Activated CD4-positive, alpha-beta memory T cell treated with anti-CD3 and anti-CD28 coated beads for 36 hours (primary cell): ENCODE measurements at regions of chr14 and their contacts with region 1.

Region 1: DNA sequence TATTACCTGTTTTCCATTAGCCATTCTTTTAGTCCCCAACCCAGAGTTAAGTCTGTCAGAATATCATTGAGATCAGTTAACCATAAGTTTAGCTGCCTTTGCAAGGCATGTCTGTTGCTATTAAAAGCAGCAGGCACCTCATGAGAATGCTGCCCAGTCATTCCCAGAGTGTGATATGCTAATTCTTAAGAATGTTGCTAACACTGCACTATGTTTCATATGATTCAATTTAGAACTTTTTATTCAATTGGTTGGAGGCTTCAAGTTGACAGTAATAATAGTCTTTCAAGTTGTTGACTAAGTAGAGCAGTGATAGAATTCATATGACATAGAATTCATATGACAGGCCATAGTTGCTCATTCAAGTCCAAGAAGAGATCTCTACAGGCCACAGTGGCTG is 292.3 kb downstream of the FUT8 start:
- DNase-seq: peak; percentile 66
- H3K4me3 Mint-ChIP-seq: no peak overlapping the region
- H3K27ac Mint-ChIP-seq: peak overlapping the region; percentile 64
- H3K4me1 Mint-ChIP-seq: peaks cover 31% of the 10 kb centered on the region
- H3K27me3 Mint-ChIP-seq: no peaks in the 10 kb centered on the region

Region 2: DNA sequence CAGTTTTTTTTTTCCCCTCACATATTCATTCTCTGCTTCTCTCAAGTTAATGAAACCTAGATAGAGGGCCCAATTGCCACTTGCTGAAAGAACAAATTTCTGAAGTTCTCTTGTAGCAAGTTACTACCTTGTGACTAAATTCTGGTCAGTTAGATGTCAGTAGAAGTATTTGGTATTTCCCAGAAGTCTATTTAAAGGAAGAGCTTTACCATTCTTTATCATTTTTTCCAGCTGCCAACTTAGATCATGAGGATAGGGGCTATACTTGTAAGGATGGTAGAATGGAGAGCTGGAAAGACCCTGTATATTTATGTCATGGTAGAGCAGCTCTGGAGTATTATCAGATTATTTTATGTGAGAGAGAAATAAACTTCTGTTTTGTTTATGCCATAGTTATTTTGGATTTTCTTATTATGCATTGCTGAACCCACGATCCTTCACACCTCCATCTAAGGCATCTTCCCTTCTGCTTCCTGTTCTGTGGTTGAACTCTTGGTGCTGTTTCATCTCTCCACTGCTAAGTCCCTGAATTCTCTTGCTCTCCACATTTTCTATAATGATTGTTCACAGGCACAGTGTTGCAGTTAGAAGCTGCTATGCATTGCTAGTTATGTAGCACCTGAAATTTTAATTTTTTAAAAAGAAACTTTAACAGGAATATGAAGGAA is 266.4 kb before region 1 on chr14:
- CTCF ChIA-PET with region 1: no interaction called
- POLR2A ChIA-PET with region 1: no interaction called
- intact Hi-C with region 1: loop called (anchors 1 kb)
- DNase-seq: no peak
- H3K4me3 Mint-ChIP-seq: no peak overlapping the region
- H3K27ac Mint-ChIP-seq: peak overlapping the region; percentile 76
- H3K4me1 Mint-ChIP-seq: peaks cover 32% of the 10 kb centered on the region
- H3K27me3 Mint-ChIP-seq: no peaks in the 10 kb centered on the region

Region 3: DNA sequence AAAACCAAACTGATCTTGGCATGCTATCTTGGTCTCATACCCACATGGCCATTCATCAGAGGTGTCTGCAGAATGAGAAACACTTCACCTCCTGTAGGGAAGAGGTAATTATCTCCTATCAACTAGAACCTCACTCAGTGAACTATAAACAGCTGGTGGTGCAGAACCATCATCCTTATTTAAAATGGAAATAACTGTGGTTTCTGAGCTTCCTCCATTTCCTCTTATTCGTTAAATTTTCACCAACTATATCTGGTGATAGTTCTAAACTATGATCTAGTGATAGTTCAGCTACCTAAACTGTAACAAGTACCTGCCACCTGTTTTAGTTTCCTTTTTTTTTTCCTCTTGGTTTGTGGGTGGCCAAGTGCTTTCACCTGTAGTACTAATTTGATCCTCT is 73.8 kb before region 1 on chr14:
- CTCF ChIA-PET with region 1: no interaction called
- POLR2A ChIA-PET with region 1: no interaction called
- intact Hi-C with region 1: no loop called
- DNase-seq: no peak
- H3K4me3 Mint-ChIP-seq: no peak overlapping the region
- H3K27ac Mint-ChIP-seq: no peak overlapping the region
- H3K4me1 Mint-ChIP-seq: peaks cover 11% of the 10 kb centered on the region
- H3K27me3 Mint-ChIP-seq: no peaks in the 10 kb centered on the region

Region 4: GRCh38 chr14:65731933-65732510 is 27.2 kb after region 1 on chr14:
- CTCF ChIA-PET with region 1: no interaction called
- POLR2A ChIA-PET with region 1: no interaction called
- intact Hi-C with region 1: loop called (anchors 1 kb)
- DNase-seq: no peak
- H3K4me3 Mint-ChIP-seq: no peak overlapping the region
- H3K27ac Mint-ChIP-seq: peak overlapping the region; percentile 62
- H3K4me1 Mint-ChIP-seq: peaks cover 14% of the 10 kb centered on the region
- H3K27me3 Mint-ChIP-seq: no peaks in the 10 kb centered on the region

Region 5: DNA sequence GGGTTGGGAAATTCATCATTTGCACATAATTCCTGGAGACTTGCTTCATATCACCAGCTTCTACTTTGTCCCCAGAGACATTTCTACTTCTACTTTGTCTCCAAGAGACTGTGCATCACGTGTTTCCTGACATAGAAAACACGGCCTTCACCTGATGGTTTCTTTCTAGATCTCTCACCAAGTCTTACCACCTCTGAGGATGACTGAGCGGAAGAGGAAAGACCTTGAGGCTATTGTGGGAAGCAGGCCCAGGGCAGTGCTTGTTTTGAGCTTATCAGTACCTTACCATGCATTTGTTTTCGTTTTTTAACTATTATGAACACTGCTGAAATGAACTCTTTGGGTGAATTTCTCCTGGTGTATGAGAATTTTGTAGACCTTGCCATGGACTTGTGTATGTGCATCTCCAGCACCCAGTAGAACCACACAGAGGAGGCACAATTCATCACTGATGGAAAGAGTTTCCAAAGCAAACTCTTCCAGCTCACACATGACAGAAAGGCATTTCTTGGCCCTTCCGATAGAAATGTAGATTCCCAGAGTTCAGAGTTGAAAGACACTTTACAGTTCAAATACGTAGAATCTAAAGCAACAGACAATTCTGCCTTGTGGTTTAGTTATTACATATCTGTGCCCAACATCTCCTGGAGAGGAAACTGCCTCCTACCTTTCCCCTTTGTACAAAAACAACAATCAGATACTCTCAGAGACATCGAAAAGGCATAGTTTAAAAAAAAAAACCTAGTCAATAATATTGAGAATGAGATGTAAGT is 142.4 kb after region 1 on chr14:
- CTCF ChIA-PET with region 1: no interaction called
- POLR2A ChIA-PET with region 1: no interaction called
- intact Hi-C with region 1: loop called (anchors 2 kb)
- DNase-seq: peak; percentile 86
- H3K4me3 Mint-ChIP-seq: peak overlapping the region; percentile 22
- H3K27ac Mint-ChIP-seq: peak overlapping the region; percentile 79
- H3K4me1 Mint-ChIP-seq: peaks cover 66% of the 10 kb centered on the region
- H3K27me3 Mint-ChIP-seq: no peaks in the 10 kb centered on the region